CD8-positive, alpha-beta T cell (primary cell): ENCODE measurements at regions of chr15 and their contacts with region 1.

Region 1: DNA sequence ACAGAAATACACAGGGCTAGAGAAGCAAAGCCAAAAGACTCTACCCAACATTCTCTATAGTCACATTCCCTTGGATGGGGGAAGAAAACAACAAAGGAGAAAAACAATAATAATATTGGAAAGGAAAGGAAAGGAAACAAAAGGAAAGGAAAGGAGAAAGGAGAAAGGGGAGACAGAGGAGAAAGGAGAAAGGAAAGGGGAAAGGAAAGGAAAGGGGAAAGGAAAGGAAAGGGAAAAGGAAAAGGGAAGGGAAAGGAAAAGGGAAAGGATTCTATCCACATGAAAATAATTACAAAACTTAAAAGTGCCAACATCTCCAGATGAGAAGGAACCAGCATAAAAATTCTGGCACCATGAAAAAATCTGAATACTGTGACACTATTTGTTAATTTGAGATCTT is 54.1 kb upstream of the MNS1 start:
- DNase-seq: no peak
- ATAC-seq: no peak
- H3K4me3 ChIP-seq: no peak overlapping the region
- H3K4me3 Mint-ChIP-seq: no peak overlapping the region
- H3K27ac ChIP-seq: no peak overlapping the region
- H3K27ac Mint-ChIP-seq: no peak overlapping the region
- H3K4me1 ChIP-seq: no peaks in the 10 kb centered on the region
- H3K4me1 Mint-ChIP-seq: no peaks in the 10 kb centered on the region
- H3K27me3 ChIP-seq: no peaks in the 10 kb centered on the region
- H3K27me3 Mint-ChIP-seq: peaks cover 12% of the 10 kb centered on the region
- CTCF ChIP-seq: no peak

Region 2: DNA sequence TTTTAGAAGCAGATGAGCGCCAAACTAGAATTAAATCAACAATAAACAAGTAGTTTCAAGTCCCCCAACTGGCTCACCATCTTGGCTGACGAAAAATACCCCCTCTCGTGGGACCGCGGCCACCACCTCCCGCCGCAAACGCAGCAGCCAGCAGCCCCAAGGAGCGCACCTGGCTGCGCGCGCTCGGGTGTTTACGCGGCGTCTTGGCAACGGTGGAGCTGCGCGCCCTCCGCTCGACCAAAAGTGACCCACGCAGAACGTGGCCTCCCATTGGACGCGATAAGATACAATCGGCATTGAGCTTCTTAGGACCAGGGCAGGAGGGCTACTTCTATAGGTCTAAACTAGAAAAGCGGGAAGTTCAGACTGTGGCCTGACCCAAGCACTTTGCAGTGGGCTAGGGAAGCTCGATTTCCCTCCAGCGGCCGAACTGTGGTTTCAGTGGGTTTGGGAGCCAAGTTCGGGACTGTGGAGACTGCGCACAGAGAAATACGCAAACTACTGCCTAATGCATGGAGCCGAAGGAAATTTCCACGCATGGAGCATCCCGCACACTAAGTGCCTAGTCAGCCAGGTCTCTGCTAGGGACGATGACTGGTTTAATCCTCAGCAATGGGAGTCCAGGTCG is 54.0 kb before region 1 on chr15 and contains the start of gene MNS1:
- CTCF ChIA-PET with region 1: no interaction called
- POLR2A ChIA-PET with region 1: no interaction called
- intact Hi-C with region 1: no loop called
- DNase-seq: peak; percentile 20 to 86 (median 62)
- ATAC-seq: peak; percentile 93
- H3K4me3 ChIP-seq: peak within 1 kb of the TSS; percentile 18 to 45
- H3K4me3 Mint-ChIP-seq: peak within 1 kb of the TSS; percentile 87
- H3K27ac ChIP-seq: no peak within 1 kb of the TSS
- H3K27ac Mint-ChIP-seq: peak within 1 kb of the TSS; percentile 34
- H3K4me1 ChIP-seq: peaks cover 14% of the 10 kb centered on the region
- H3K4me1 Mint-ChIP-seq: peaks cover 32% of the 10 kb centered on the region
- H3K27me3 ChIP-seq: peaks cover 0 to 4% of the 10 kb centered on the region in 2 experiments
- H3K27me3 Mint-ChIP-seq: peaks cover 25% of the 10 kb centered on the region
- CTCF ChIP-seq: no peak
- total RNA-seq, gene MNS1: not detected

Region 3: DNA sequence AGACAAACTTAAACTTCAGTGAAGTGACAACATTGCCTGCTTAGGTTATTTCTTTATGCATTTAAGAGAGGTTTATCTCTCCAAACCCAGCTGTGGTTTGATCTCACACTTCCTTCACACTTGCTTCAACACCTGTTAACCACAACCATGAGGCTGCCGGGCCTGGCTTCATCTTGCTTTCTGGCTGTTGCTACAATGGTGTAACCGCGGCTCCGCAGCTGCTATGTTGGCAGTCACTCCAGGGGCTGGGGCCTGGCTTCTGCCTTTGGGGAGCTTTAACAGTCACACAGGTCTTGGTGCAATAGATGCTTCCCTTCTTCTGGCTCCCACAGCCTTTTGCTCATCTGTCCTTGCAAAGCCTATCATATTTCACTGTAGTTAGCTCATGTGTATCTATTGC is 18.9 kb after region 1 on chr15:
- CTCF ChIA-PET with region 1: no interaction called
- POLR2A ChIA-PET with region 1: no interaction called
- intact Hi-C with region 1: loop called in 1 of 2 experiments (anchors 2 kb)
- DNase-seq: peak; percentile 14 to 86 (median 50)
- ATAC-seq: peak; percentile 81
- H3K4me3 ChIP-seq: no peak overlapping the region
- H3K4me3 Mint-ChIP-seq: no peak overlapping the region
- H3K27ac ChIP-seq: no peak overlapping the region
- H3K27ac Mint-ChIP-seq: peak overlapping the region; percentile 69
- H3K4me1 ChIP-seq: peaks cover 4% of the 10 kb centered on the region
- H3K4me1 Mint-ChIP-seq: peaks cover 19% of the 10 kb centered on the region
- H3K27me3 ChIP-seq: no peaks in the 10 kb centered on the region
- H3K27me3 Mint-ChIP-seq: no peaks in the 10 kb centered on the region
- CTCF ChIP-seq: no peak

Region 4: GRCh38 chr15:56989411-56989924 is 470.5 kb after region 1 on chr15:
- CTCF ChIA-PET with region 1: no interaction called
- POLR2A ChIA-PET with region 1: no interaction called
- intact Hi-C with region 1: no loop called
- DNase-seq: peak in 1 of 9 experiments; percentile 25
- ATAC-seq: no peak
- H3K4me3 ChIP-seq: no peak overlapping the region
- H3K4me3 Mint-ChIP-seq: no peak overlapping the region
- H3K27ac ChIP-seq: no peak overlapping the region
- H3K27ac Mint-ChIP-seq: no peak overlapping the region
- H3K4me1 ChIP-seq: peaks cover 3% of the 10 kb centered on the region
- H3K4me1 Mint-ChIP-seq: peaks cover 49% of the 10 kb centered on the region
- H3K27me3 ChIP-seq: no peaks in the 10 kb centered on the region
- H3K27me3 Mint-ChIP-seq: no peaks in the 10 kb centered on the region
- CTCF ChIP-seq: no peak